Right ventricle myocardium inferior (tissue), 1 donor: ENCODE measurements at regions of chr9 and their contacts with region 1.

Region 1: DNA sequence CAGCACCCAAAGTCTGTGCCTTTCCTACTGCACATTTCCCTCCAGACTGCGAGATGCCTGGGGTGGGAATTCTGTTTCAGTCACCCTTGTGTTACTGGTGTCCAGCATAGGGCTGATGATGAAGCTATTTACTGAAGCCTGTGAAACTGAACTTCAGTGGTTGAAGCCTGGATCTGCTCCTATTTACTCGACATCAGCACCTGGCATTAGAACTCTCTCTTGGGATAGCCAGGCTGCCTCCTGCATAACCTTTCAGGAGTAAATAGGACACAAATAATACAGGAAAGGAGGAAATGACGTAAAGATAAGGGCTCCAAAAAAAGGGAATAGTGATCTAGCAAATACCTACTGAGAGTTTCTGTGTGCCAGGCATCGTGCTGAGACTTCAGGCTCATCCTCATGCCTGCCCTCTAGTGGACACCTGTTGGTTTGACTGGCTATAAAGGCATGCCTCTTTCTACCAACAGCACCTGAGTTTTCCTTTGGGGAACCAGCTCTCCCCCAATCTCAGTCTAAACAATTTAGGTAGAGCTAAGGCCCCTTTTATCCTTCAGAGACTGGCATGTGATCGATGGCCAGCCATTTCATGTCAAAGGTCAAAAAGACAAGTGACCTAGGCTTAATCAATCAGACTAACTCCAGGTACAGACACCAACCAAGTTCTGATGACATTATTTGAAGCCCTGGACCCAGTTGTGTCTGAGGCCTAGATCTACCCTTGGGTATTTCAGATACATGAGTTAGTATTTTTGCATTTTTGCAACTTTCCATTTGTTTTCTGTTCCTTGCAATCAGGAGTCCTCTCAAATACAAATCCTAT is 192.1 kb upstream of the TRIM32 start:
- DNase-seq: no peak
- ATAC-seq: peak; percentile 45

Region 2: GRCh38 chr9:116149844-116150243 is 345.2 kb before region 1 on chr9:
- intact Hi-C with region 1: loop called (anchors 5 kb)
- DNase-seq: no peak
- ATAC-seq: peak; percentile 21

Region 3: GRCh38 chr9:116355153-116355921 is 139.7 kb before region 1 on chr9:
- intact Hi-C with region 1: no loop called
- DNase-seq: no peak
- ATAC-seq: peak; percentile 90

Region 4: DNA sequence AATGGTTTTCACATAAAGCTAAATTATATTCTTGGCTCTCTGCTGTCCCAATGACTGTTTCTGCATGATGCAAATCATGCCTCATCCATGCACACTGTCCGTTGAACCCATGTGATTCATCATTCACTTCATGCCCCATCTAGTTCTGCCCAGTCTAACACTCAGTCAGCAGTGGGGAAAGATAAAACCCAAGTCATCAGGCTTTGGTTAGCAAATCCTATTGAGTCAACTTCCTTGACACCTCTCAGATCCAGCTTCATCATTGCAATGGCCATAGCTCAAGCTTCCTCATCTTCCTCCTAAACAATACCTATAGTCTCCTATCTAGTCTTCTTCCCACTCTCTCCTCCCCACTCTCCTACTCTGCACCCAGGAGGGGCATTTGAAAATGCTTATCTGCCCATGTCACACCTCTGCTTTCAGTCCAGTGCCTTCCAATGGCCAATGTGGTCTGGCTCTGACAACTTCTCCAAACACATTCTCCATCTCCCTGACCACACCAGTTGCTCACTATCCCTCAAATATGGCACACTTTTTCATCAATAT is 74.0 kb before region 1 on chr9:
- intact Hi-C with region 1: no loop called
- DNase-seq: no peak
- ATAC-seq: no peak

Region 5: GRCh38 chr9:116661037-116661954 is 166.3 kb after region 1 on chr9:
- intact Hi-C with region 1: loop called (anchors 5 kb)
- DNase-seq: no peak
- ATAC-seq: peak; percentile 83